Psoas muscle (tissue), 8 donors: ENCODE measurements at regions of chr1 and their contacts with region 1.

Region 1: GRCh38 chr1:23679815-23680214 is 11.8 kb upstream of the RPL11 start:
- DNase-seq: no peak
- ATAC-seq: no peak
- H3K4me3 ChIP-seq: no peak overlapping the region
- H3K27ac ChIP-seq: no peak overlapping the region
- H3K4me1 ChIP-seq: no peaks in the 10 kb centered on the region
- H3K27me3 ChIP-seq: peaks cover 0 to 1% (median 0%) of the 10 kb centered on the region in 3 donors
- CTCF ChIP-seq: no peak

Region 2: DNA sequence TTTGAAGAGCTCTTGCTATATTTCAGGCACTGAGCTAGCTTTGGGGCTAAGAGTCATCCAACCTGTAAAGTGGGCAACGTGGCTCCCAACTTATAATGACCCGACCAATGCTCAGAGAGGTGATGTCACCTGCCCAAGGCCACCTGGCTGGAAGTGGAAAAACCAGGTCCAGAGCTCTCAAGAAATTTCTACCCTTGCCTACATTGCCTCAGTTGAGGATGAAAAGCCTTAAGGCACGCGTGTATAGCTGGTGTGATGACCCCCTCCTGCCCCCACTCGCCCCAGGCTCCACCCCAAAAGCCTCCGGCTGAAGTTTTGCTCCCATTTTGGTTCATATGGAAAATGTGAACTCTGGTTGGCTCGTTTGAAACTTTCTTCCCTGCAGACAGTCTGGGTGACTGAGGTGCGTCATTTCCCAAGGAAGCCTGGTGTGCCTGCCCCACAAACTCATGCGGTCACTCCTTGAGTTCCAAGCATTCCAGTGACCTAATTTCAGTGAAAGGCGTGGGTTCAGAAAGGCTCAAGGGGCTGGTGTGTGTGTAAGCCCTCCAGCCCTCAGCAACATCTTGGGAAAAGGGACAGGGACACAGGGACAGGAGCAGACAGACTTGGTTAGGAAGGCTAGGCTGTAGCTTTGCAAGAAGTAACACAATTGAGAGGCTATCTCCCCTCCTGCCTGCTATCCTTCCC is 483.0 kb before region 1 on chr1:
- intact Hi-C with region 1: loop called in 1 of 2 experiments (anchors 5 kb)
- DNase-seq: no peak
- ATAC-seq: no peak
- H3K4me3 ChIP-seq: no peak overlapping the region
- H3K27ac ChIP-seq: no peak overlapping the region
- H3K4me1 ChIP-seq: no peaks in the 10 kb centered on the region
- H3K27me3 ChIP-seq: peaks cover 0 to 4% (median 2%) of the 10 kb centered on the region in 3 donors
- CTCF ChIP-seq: no peak

Region 3: DNA sequence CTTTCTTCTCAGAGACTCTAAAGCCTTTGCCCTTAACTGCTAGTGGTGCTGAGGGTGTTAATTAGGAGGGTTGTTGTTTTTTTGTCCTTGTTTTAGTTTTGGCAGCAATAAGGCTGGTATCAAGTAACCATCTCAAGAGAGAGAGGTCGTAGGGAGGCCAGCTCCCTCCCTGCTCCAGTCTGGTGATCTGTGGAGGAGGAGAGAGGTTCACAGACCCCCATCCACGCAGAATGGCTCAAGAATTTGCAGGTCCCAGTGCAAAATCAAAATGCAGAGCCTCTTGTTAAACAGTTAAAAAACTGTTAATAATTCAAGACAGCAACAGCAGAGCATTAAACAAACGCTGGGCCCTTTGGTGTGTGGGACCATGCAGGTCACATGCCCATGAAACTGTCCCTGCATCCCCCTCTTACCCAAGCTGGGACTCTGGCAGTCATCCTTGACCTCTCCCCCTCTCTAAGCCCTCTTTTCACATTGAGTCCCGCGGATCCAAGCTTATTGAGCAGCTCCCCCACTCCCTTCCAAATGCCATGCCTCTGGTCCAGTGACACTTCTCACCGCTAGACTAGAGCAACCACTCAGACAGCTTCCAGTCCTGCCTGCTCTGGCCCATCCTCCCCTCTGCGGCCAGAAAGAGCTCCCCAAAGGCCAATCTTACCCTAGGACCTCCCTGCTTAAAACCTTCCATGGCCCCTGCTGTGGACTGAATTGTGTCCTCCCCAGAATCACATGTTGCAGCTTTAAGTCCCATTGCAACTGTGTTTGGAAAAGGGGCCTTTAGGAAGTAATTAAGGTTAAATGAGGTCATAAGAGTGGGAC is 35.9 kb before region 1 on chr1:
- intact Hi-C with region 1: no loop called
- DNase-seq: no peak
- ATAC-seq: peak in 2 of 4 donors; percentile 32 to 60
- H3K4me3 ChIP-seq: no peak overlapping the region
- H3K27ac ChIP-seq: no peak overlapping the region
- H3K4me1 ChIP-seq: peaks cover 21% of the 10 kb centered on the region
- H3K27me3 ChIP-seq: no peaks in the 10 kb centered on the region
- CTCF ChIP-seq: no peak

Region 4: GRCh38 chr1:23779826-23780371 is 100.1 kb after region 1 on chr1:
- intact Hi-C with region 1: no loop called
- DNase-seq: no peak
- ATAC-seq: no peak
- H3K4me3 ChIP-seq: peak overlapping the region; percentile 78
- H3K27ac ChIP-seq: peak overlapping the region; percentile 92
- H3K4me1 ChIP-seq: peaks cover 33% of the 10 kb centered on the region
- H3K27me3 ChIP-seq: no peaks in the 10 kb centered on the region
- CTCF ChIP-seq: no peak